ENCODE measurements at regions of chr4 and their contacts with region 1.

Region 1: DNA sequence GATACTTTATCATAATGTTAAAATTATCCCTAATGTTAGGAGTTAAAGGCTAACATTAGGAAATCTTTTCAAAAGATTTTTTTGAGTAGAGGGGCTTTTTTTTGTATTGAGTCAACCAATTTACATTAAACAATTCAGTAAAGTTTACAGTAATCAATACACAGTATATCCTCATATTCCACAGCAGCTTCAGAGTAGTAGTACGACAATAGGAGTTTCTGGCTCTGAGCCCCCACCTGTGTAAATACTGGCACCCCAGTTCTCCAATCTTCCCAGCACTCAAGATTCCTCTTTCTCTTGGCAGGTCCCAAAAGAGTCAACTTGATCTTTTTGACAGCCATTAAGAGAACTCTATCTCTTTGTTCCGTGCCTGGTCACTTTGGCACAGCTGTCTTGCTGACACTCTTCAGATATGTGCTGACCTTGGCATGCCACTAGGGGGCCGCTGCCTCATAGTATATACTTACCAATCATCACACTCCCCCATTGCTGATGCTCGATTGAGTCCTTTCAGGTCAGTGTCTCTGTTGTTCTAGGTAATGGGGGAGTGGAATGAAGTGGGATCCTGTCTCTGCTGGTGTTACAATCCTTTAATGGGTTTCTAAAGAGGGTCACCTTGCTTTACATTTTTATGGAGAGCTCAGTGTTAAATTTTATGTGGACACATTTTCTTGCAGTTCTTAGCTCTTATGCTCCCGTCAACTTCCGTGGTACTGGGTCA is 19.5 kb upstream of the CCNI start:
- DNase-seq: peak; percentile 53
- ATAC-seq: peak; percentile 100
- H3K4me3 Mint-ChIP-seq: no peak overlapping the region
- H3K27ac Mint-ChIP-seq: peak overlapping the region; percentile 8
- H3K4me1 Mint-ChIP-seq: peaks cover 27% of the 10 kb centered on the region
- H3K27me3 Mint-ChIP-seq: no peaks in the 10 kb centered on the region
- CTCF ChIP-seq: peak; percentile 86

Region 2: GRCh38 chr4:77044461-77045150 is 50.7 kb before region 1 on chr4:
- CTCF ChIA-PET with region 1: interaction called, 12 read pairs
- POLR2A ChIA-PET with region 1: no interaction called
- intact Hi-C with region 1: no loop called
- DNase-seq: no peak
- ATAC-seq: no peak
- H3K4me3 Mint-ChIP-seq: no peak overlapping the region
- H3K27ac Mint-ChIP-seq: no peak overlapping the region
- H3K4me1 Mint-ChIP-seq: peaks cover 17% of the 10 kb centered on the region
- H3K27me3 Mint-ChIP-seq: no peaks in the 10 kb centered on the region
- CTCF ChIP-seq: peak; percentile 31

Region 3: DNA sequence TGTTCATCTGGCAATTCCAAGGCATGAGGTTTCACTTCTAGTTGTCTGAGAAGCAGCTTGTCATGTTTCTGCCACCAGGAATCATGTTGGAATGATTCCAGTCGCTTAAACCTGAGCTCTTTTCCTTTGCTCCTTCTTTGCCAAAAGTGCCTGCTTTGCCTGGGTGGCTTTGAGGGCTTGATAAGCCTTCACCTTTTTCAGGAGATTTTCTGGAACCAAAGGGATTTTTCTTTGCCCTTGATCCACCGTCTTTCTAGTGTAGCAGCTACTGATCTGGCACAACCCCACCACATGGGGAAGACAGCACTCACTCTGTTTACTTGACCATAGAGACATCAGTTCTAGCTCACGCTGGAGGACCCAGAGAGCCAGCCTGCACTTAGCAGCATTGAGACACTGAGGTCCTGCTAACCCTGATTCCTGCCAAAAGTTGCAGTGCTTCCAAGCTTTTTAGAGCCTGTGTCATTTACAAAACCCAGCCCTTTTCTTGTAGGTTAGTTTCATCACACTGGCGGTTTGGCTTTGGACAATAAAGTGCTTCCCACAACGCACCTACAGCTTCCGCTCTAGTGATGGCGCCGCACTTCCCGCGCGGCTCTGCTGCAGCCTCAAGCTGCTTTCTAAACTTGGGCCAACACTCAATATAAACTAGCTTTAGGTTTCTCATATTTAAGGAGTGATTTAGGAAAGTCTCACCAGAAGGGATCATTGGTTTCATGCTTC is 12.2 kb before region 1 on chr4:
- CTCF ChIA-PET with region 1: interaction called, 11 read pairs
- POLR2A ChIA-PET with region 1: interaction called, 4 read pairs
- intact Hi-C with region 1: no loop called
- DNase-seq: no peak
- ATAC-seq: no peak
- H3K4me3 Mint-ChIP-seq: no peak overlapping the region
- H3K27ac Mint-ChIP-seq: no peak overlapping the region
- H3K4me1 Mint-ChIP-seq: peaks cover 19% of the 10 kb centered on the region
- H3K27me3 Mint-ChIP-seq: no peaks in the 10 kb centered on the region
- CTCF ChIP-seq: no peak

Region 4: DNA sequence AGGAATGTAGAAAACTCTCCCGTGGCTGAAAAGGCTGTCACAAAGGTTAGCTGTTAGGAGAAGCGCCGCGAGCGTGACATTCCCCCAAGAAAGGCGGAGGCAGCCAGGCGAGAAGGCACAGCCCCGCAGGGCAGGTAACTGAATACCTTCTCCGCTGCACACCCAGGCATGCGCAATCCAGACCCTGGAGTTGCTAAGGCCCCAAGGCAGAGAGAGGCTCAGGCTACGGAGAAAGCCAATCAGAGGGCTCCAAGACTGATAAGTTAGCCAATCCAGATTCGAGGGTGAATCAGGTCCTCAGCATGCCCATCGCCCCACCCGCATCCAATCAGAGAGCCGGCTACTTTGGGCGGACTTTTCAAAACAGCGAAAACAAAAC is 61.3 kb after region 1 on chr4:
- CTCF ChIA-PET with region 1: interaction called, 21 read pairs
- POLR2A ChIA-PET with region 1: interaction called, 12 read pairs
- intact Hi-C with region 1: loop called (anchors 1 kb)
- DNase-seq: no peak
- ATAC-seq: peak; percentile 84
- H3K4me3 Mint-ChIP-seq: peak overlapping the region; percentile 99
- H3K27ac Mint-ChIP-seq: peak overlapping the region; percentile 100
- H3K4me1 Mint-ChIP-seq: peaks cover 75% of the 10 kb centered on the region
- H3K27me3 Mint-ChIP-seq: no peaks in the 10 kb centered on the region
- CTCF ChIP-seq: no peak

Region 5: GRCh38 chr4:77209012-77209411 is 113.8 kb after region 1 on chr4:
- CTCF ChIA-PET with region 1: interaction called, 263 read pairs
- POLR2A ChIA-PET with region 1: interaction called, 7 read pairs
- intact Hi-C with region 1: no loop called
- DNase-seq: no peak
- ATAC-seq: no peak
- H3K4me3 Mint-ChIP-seq: no peak overlapping the region
- H3K27ac Mint-ChIP-seq: no peak overlapping the region
- H3K4me1 Mint-ChIP-seq: no peaks in the 10 kb centered on the region
- H3K27me3 Mint-ChIP-seq: no peaks in the 10 kb centered on the region
- CTCF ChIP-seq: no peak

Region 6: GRCh38 chr4:77284036-77284435 is 188.8 kb after region 1 on chr4:
- CTCF ChIA-PET with region 1: no interaction called
- POLR2A ChIA-PET with region 1: no interaction called
- intact Hi-C with region 1: no loop called
- DNase-seq: no peak
- ATAC-seq: no peak
- H3K4me3 Mint-ChIP-seq: no peak overlapping the region
- H3K27ac Mint-ChIP-seq: no peak overlapping the region
- H3K4me1 Mint-ChIP-seq: no peaks in the 10 kb centered on the region
- H3K27me3 Mint-ChIP-seq: no peaks in the 10 kb centered on the region
- CTCF ChIP-seq: no peak

Region 7: DNA sequence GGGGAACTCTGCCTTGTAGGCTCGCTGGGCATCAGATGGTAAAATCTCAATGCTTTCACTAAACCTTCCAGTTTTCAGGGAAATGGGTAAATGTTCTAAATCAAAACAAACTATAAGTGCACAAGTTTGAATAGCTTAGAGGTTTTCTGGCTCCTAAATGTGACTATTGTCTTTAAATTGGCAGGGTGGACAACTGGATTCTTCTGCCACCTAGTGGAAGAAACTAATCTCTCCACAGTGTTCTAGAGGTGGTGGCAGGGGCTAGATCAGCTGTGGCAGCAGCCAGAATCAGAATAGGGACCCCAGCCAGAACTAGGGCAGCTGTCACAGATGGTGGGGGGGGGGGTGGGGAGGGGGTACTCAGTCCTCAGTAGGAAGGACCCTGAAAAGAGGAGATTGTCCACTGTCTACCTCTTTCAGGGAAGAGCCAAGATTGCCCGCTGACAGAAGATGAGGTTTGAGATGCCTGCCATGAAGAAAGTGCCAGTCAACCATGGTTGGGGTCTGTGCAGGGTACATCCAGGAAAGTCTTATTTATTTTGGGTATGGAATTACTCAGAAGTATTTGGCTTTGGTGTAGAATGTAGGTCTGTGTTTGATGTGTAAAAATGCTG is 263.2 kb after region 1 on chr4:
- CTCF ChIA-PET with region 1: interaction called, 6 read pairs
- POLR2A ChIA-PET with region 1: no interaction called
- intact Hi-C with region 1: loop called (anchors 1 kb)
- DNase-seq: no peak
- ATAC-seq: no peak
- H3K4me3 Mint-ChIP-seq: no peak overlapping the region
- H3K27ac Mint-ChIP-seq: no peak overlapping the region
- H3K4me1 Mint-ChIP-seq: peaks cover 17% of the 10 kb centered on the region
- H3K27me3 Mint-ChIP-seq: peaks cover 3% of the 10 kb centered on the region
- CTCF ChIP-seq: no peak